ENCODE measurements at regions of chr11 and their contacts with region 1.

Region 1: GRCh38 chr11:106087815-106088435 is 10.5 kb downstream of the AASDHPPT start:
- DNase-seq: peak; percentile 65
- ATAC-seq: peak; percentile 64
- H3K4me3 ChIP-seq: no peak overlapping the region
- H3K27ac ChIP-seq: no peak overlapping the region
- H3K4me1 ChIP-seq: peaks cover 5% of the 10 kb centered on the region
- H3K27me3 ChIP-seq: no peaks in the 10 kb centered on the region
- CTCF ChIP-seq: peak; percentile 92
- POLR2A ChIP-seq: no peak
- RAD21 ChIP-seq: peak; percentile 87

Region 2: GRCh38 chr11:106133529-106133928 is 45.6 kb after region 1 on chr11:
- CTCF ChIA-PET with region 1: interaction called, 3 read pairs
- POLR2A ChIA-PET with region 1: no interaction called
- dilution Hi-C with region 1: no loop called
- in situ Hi-C with region 1: no loop called
- intact Hi-C with region 1: loop called (anchors 1 kb)
- DNase-seq: no peak
- ATAC-seq: no peak
- H3K4me3 ChIP-seq: no peak overlapping the region
- H3K27ac ChIP-seq: no peak overlapping the region
- H3K4me1 ChIP-seq: no peaks in the 10 kb centered on the region
- H3K27me3 ChIP-seq: peaks cover 1% of the 10 kb centered on the region; the same call in 1 of the 2 replicates
- CTCF ChIP-seq: peak; percentile 32
- POLR2A ChIP-seq: no peak
- RAD21 ChIP-seq: no peak

Region 3: DNA sequence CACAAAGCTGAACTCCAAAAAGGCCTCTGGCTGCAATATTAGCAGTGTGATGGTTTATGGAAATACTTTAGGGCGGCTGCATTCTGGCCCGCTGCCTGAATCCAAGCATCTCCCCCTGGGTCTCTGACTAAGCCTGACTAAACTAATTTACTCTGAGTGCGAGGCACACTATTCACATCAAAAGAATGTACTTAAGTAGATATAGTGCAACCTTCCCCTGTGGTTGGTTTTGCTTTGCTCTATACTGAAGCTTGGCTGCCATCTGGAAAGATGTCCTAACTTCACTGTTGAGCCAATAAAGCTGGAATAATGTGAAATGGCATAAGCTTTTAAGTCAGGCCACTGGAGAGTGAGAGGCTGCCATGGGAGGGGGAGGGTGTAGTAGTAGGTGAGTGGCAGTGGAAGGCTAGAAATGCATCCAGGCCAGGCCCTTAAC is 311.2 kb after region 1 on chr11:
- CTCF ChIA-PET with region 1: no interaction called
- POLR2A ChIA-PET with region 1: no interaction called
- dilution Hi-C with region 1: no loop called
- in situ Hi-C with region 1: no loop called
- intact Hi-C with region 1: loop called (anchors 10 kb)
- DNase-seq: peak; percentile 100
- ATAC-seq: peak; percentile 96
- H3K4me3 ChIP-seq: no peak overlapping the region
- H3K27ac ChIP-seq: peak overlapping the region; percentile 90
- H3K4me1 ChIP-seq: peaks cover 15% of the 10 kb centered on the region
- H3K27me3 ChIP-seq: no peaks in the 10 kb centered on the region
- CTCF ChIP-seq: no peak
- POLR2A ChIP-seq: 0 out of 2 replicates have a peak, but pooled peaks have one; percentile 17
- RAD21 ChIP-seq: no peak; the same call in 1 of the 2 replicates

Region 4: GRCh38 chr11:106585061-106585460 is 497.1 kb after region 1 on chr11:
- CTCF ChIA-PET with region 1: no interaction called
- POLR2A ChIA-PET with region 1: no interaction called
- dilution Hi-C with region 1: no loop called
- in situ Hi-C with region 1: no loop called
- intact Hi-C with region 1: loop called (anchors 5 kb)
- DNase-seq: peak; percentile 51
- ATAC-seq: peak; percentile 64
- H3K4me3 ChIP-seq: no peak overlapping the region
- H3K27ac ChIP-seq: no peak overlapping the region
- H3K4me1 ChIP-seq: no peaks in the 10 kb centered on the region
- H3K27me3 ChIP-seq: no peaks in the 10 kb centered on the region
- CTCF ChIP-seq: peak; percentile 70
- POLR2A ChIP-seq: no peak
- RAD21 ChIP-seq: peak; percentile 82

Measured in IMR-90 (cell line).